Testis (tissue), 5 donors: ENCODE measurements at regions of chr2 and their contacts with region 1.

Region 1: GRCh38 chr2:207746131-207746530 is 23.6 kb downstream of the FZD5 start:
- DNase-seq: peak; percentile 71
- H3K4me3 ChIP-seq: no peak overlapping the region
- H3K27ac ChIP-seq: no peak overlapping the region
- H3K4me1 ChIP-seq: no peaks in the 10 kb centered on the region
- H3K27me3 ChIP-seq: no peaks in the 10 kb centered on the region
- CTCF ChIP-seq: peak; percentile 67 to 74 (median 73)
- POLR2A ChIP-seq: no peak

Region 2: DNA sequence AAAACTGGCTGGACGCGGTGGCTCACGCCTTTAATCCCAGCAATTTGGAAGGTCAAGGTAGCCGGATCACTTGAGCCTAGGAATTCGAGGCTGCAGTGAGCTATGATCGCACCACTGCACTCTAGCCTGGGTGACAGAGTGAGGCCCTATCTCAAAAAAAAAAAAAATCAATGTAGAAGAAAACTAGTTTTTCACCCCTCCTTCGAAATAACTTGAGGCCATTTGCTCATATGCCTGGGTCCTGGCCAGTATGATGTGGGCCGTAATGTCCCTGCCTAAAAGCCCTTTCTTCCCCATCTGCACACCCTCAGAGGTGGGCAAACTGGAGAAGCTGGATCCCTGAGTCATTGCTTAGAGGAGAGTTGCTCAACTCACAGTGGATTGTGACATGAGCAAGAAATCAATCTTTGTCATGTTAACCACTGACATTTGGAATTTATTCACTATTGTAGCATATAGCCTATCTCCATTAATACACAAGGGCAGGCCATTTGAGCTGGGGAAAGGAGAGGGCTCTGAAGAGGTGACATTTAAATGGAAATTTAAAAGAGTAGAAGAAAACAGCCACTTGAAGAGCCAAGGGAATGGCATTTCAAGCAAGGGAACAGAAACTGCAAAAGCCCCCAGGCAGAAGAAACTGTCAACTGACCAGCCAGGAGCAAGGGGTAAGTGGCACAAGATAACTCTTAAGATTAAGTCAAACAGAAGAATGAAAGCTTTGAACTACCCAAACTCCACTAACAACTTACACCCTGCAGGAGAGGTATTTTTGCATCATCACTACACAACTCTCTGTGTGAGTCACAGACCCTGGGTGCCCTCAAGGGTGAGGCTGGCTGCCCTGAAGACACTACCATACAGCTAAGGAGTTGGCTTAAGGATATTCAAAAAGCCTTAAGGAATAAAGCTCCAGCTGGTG is 113.3 kb before region 1 on chr2:
- intact Hi-C with region 1: no loop called
- DNase-seq: no peak
- H3K4me3 ChIP-seq: no peak overlapping the region
- H3K27ac ChIP-seq: no peak overlapping the region
- H3K4me1 ChIP-seq: no peaks in the 10 kb centered on the region
- H3K27me3 ChIP-seq: no peaks in the 10 kb centered on the region
- CTCF ChIP-seq: no peak
- POLR2A ChIP-seq: no peak

Region 3: GRCh38 chr2:207662203-207662602 is 83.9 kb before region 1 on chr2:
- intact Hi-C with region 1: no loop called
- DNase-seq: no peak
- H3K4me3 ChIP-seq: no peak overlapping the region
- H3K27ac ChIP-seq: no peak overlapping the region
- H3K4me1 ChIP-seq: no peaks in the 10 kb centered on the region
- H3K27me3 ChIP-seq: no peaks in the 10 kb centered on the region
- CTCF ChIP-seq: no peak
- POLR2A ChIP-seq: no peak

Region 4: GRCh38 chr2:208072250-208072892 is 326.2 kb after region 1 on chr2:
- intact Hi-C with region 1: loop called (anchors 10 kb)
- DNase-seq: peak; percentile 83
- H3K4me3 ChIP-seq: no peak overlapping the region
- H3K27ac ChIP-seq: no peak overlapping the region
- H3K4me1 ChIP-seq: no peaks in the 10 kb centered on the region
- H3K27me3 ChIP-seq: no peaks in the 10 kb centered on the region
- CTCF ChIP-seq: peak in 2 of 3 experiments; percentile 64 to 77
- POLR2A ChIP-seq: no peak

Region 5: GRCh38 chr2:208240619-208241209 is 494.6 kb after region 1 on chr2:
- intact Hi-C with region 1: no loop called
- DNase-seq: no peak
- H3K4me3 ChIP-seq: no peak overlapping the region
- H3K27ac ChIP-seq: no peak overlapping the region
- H3K4me1 ChIP-seq: no peaks in the 10 kb centered on the region
- H3K27me3 ChIP-seq: no peaks in the 10 kb centered on the region
- CTCF ChIP-seq: no peak
- POLR2A ChIP-seq: no peak